ENCODE measurements at regions of chr9 and their contacts with region 1.

Region 1: GRCh38 chr9:36166101-36166927 is 2.9 kb upstream of the CCIN start:
- DNase-seq: peak; percentile 60 to 95 (median 87)

Region 2: GRCh38 chr9:36036780-36037548 is 129.3 kb before region 1 on chr9 and contains the start of gene RECK:
- intact Hi-C with region 1: loop called (anchors 10 kb)
- DNase-seq: peak; percentile 86 to 97 (median 93)

Region 3: DNA sequence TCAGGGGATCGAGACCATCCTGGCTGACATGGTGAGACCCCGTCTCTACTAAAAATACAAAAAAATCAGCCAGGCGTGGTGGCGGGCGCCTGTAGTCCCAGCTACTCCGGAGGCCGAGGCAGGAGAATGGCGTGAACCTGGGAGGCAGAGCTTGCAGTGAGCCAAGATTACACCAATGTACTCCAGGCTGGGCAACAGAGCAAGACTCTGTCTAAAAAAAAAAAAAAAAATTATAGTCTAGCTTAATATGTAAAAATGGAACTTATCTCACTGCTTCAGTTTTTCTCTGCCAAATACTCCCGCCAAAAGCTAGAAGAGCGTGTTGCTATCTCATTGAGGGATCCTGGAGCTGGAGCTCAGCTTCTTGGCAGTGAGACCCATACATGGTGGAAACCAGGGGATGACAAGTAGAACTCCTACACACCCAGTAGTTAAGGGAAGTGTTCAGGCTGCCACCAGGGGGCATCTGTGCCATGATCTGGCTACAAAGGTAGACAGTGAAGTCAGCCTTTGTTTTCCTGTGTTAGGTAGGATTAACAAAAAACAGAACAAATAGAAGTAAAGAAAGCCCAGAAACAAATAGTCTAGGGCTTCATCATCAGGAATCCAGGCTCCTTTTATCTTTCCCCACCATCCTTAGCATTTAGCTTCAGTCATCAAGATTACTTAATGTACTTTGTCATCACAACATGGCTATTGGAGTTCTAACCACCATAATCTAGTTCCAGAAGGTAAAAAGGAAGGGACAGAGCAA is 63.4 kb before region 1 on chr9:
- intact Hi-C with region 1: loop called (anchors 1 kb)
- DNase-seq: peak; percentile 67 to 94 (median 88)